CD4-positive, alpha-beta memory T cell (primary cell): ENCODE measurements at regions of chr2 and their contacts with region 1.

Region 1: DNA sequence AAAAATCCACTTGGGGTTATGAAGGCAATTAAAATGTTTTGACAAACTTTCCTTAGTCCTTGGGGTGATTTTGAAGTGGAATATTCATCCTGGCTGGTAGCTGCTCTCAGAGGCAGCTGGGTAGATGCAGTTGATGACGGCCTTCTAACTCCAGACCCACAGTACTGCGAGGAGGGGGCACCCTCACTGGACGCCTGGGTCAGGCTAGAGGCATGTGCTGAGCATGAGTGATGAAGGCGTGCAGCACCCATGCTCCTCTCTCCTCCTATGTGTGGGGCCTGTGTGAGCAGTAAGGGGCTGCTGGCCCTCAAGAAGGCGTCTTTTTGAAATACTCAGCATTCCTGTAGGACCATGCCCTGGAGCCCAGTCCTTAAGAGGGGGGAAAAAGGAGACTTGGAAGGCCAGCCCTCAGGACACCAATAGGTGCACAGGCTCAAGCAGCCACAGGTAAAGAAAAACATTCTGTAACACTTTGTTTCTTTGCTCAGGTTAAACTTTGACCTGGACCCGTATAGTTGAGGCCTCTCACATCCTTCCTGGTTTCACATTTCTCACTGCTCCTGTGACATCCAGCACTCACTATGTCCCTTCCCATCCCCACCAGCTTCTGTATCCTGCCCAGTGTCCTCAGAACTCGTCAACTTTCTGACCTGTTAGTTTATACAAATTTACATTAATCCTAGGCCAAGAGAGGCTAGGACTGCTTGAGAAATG is 64.4 kb downstream of the CD8B2 start:
- DNase-seq: no peak
- H3K4me3 ChIP-seq: no peak overlapping the region
- H3K4me3 Mint-ChIP-seq: no peak overlapping the region
- H3K27ac ChIP-seq: no peak overlapping the region
- H3K27ac Mint-ChIP-seq: no peak overlapping the region
- H3K4me1 ChIP-seq: no peaks in the 10 kb centered on the region
- H3K4me1 Mint-ChIP-seq: no peaks in the 10 kb centered on the region
- H3K27me3 ChIP-seq: no peaks in the 10 kb centered on the region
- H3K27me3 Mint-ChIP-seq: peaks cover 7 to 16% of the 10 kb centered on the region in 2 donors

Region 2: DNA sequence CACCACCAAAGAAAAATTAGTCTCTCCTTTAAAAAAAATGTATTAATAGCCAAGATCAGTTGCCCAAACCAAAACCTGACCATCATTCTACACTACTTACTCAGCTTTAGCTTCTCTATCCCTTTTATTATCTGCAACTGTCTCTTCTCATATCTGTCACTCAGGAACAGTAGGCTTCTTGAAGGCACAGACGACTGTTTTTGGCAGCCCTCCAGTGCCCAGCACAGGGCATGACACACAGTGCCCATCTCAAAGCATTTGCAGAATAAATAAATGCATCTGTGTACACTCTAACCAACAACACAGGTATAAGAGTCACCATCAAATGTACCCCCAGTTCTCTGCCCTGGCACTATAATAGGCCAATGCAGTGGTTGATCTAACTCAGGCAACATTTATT is 474.6 kb before region 1 on chr2:
- CTCF ChIA-PET with region 1: no interaction called
- POLR2A ChIA-PET with region 1: no interaction called
- intact Hi-C with region 1: no loop called
- DNase-seq: no peak
- H3K4me3 ChIP-seq: no peak overlapping the region
- H3K4me3 Mint-ChIP-seq: no peak overlapping the region
- H3K27ac ChIP-seq: no peak overlapping the region
- H3K27ac Mint-ChIP-seq: peak overlapping the region in 2 of 7 donors; percentile 7 to 39
- H3K4me1 ChIP-seq: no peaks in the 10 kb centered on the region
- H3K4me1 Mint-ChIP-seq: peaks cover 5 to 20% (median 12%) of the 10 kb centered on the region in 4 donors
- H3K27me3 ChIP-seq: no peaks in the 10 kb centered on the region
- H3K27me3 Mint-ChIP-seq: no peaks in the 10 kb centered on the region

Region 3: DNA sequence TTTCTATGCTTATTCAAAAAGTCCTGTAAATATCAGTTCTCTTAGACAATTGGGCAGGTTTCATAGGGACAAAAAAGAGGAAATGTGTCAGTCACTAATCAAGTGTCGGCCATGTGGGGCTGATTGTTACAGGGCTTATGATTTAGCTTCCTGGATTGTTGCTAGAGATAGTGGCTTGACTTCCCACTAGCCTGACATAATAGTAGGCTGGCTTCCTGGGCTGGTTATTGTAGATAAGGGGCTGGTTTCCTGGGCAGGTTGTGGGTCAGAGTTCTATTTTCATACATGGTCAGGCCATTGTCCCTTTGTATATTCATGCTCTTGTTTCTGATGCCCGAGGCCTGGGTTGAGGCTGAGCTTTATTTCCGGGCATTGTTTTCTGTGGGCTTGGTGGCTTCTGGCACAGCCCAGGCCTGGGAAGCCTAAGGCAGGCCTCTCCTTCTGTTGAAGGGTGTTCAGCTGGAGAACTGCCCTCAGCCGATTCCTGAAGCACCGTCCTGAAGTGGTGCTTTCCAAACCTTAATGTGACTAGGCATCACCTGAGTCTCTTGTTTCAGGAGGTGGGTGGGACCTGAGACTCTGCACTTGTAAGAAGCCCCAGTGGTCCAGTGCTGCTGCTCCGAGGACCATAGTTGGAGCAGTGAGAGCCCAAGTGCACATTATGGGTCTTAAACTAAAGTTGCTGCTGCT is 27.5 kb before region 1 on chr2:
- CTCF ChIA-PET with region 1: no interaction called
- POLR2A ChIA-PET with region 1: no interaction called
- intact Hi-C with region 1: loop called (anchors 1 kb)
- DNase-seq: no peak
- H3K4me3 ChIP-seq: no peak overlapping the region
- H3K4me3 Mint-ChIP-seq: peak overlapping the region in 1 of 8 donors; percentile 33
- H3K27ac ChIP-seq: no peak overlapping the region
- H3K27ac Mint-ChIP-seq: no peak overlapping the region
- H3K4me1 ChIP-seq: no peaks in the 10 kb centered on the region
- H3K4me1 Mint-ChIP-seq: no peaks in the 10 kb centered on the region
- H3K27me3 ChIP-seq: no peaks in the 10 kb centered on the region
- H3K27me3 Mint-ChIP-seq: peaks cover 0 to 2% of the 10 kb centered on the region in 2 donors

Region 4: DNA sequence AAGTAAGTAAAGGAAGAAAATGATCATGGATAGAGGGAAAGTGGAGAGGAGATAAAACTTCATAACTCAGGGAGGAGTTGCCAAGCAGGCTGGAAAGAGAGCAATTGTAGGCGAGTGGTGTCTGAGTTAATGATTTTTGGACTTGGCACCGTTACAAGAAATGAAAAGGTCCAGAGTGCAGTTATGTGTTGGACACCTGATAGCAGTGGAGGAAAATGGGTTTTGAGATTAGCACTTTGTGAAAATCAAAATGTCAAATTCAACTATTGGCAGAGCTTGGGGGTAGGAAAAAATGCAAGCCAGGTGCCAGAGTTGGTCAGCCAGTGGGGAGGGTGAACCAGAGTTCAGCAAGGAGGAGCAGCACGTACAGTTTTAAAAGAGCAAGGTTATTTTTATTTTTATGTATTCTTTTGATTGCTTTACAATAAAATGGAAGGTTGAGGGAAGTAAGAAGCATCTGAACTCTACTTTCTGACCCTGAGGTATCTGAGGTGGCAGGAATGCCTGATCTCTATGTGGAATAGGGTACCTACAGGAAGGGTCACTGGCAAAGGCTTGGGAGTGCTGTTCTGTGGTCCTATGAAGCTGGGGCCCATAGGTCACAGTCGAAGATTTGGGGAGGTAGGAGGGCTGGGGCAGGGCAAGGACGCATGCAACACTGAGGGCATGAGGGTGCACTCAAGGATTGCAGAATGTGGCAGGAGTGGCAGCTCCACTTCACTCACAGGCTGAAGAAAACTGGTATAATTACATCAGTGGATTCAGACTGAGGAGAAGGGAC is 63.1 kb after region 1 on chr2:
- CTCF ChIA-PET with region 1: no interaction called
- POLR2A ChIA-PET with region 1: no interaction called
- intact Hi-C with region 1: no loop called
- DNase-seq: no peak
- H3K4me3 ChIP-seq: no peak overlapping the region
- H3K4me3 Mint-ChIP-seq: no peak overlapping the region
- H3K27ac ChIP-seq: no peak overlapping the region
- H3K27ac Mint-ChIP-seq: no peak overlapping the region
- H3K4me1 ChIP-seq: no peaks in the 10 kb centered on the region
- H3K4me1 Mint-ChIP-seq: no peaks in the 10 kb centered on the region
- H3K27me3 ChIP-seq: no peaks in the 10 kb centered on the region
- H3K27me3 Mint-ChIP-seq: peaks cover 3 to 9% of the 10 kb centered on the region in 2 donors

Region 5: DNA sequence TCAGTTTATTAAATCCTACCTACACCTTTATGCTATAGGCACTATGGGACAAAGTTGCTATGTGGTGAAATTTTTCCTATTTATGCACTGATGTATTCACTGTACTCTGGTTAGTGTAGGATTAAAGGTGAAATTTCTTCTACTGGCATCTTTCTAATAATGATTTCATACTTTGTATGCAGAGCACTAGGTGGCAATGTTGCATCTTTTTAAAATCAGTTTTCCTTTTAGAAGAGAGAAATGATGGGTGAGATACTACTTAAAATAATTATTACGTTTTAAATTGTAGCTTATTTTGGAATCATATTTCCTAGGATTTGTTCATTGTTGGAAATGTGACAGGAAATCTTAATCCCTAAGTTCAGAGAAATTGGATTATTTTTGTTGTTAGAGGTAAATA is 86.5 kb after region 1 on chr2:
- CTCF ChIA-PET with region 1: no interaction called
- POLR2A ChIA-PET with region 1: no interaction called
- intact Hi-C with region 1: no loop called
- DNase-seq: no peak
- H3K4me3 ChIP-seq: no peak overlapping the region
- H3K4me3 Mint-ChIP-seq: no peak overlapping the region
- H3K27ac ChIP-seq: no peak overlapping the region
- H3K27ac Mint-ChIP-seq: no peak overlapping the region
- H3K4me1 ChIP-seq: no peaks in the 10 kb centered on the region
- H3K4me1 Mint-ChIP-seq: no peaks in the 10 kb centered on the region
- H3K27me3 ChIP-seq: no peaks in the 10 kb centered on the region
- H3K27me3 Mint-ChIP-seq: peaks cover 5 to 12% of the 10 kb centered on the region in 2 donors